PC-3 (cell line): ENCODE measurements at regions of chr22 and their contacts with region 1.

Region 1: DNA sequence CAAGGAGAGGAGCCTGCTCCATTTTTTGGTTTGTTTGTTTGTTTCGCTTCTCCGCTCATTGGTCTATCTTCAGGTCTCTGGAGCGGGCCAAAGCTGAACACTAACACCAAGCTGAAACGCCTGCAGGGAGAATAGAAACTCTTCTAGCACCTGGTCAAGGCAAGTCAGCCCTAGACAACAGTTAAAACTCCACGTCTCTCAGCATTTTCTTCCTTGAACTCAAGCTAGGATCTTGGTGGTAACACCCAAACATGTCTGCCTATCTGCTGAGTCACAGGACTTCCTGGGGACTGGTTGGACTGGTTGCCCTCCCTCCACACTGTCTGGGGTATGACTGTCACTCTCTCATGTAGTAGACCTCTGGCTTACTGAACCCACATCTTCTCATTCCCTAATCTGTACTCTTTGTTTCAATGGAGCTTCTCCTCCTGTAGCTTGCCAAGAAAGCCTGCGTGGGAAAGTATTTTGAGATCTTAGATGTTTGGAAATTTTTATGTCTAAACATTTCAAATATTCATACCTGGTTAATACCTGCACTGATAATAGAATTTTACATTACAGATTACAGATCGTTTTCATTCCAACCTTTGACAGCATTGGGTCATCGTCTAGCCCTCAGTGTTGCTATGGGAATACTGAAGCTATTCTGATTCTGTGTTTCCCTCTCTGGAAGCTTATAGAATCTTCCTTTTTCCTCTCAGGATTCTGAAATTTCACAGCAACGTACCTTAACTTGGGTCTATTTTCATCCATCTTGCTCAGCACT is 24.1 kb upstream of the RBFOX2 start:
- DNase-seq: peak; percentile 81
- ATAC-seq: peak; percentile 92
- H3K4me3 ChIP-seq: peak overlapping the region; percentile 26; the same call in 1 of the 2 replicates
- H3K27ac ChIP-seq: peak overlapping the region; percentile 97
- H3K4me1 ChIP-seq: peaks cover 23% of the 10 kb centered on the region
- H3K27me3 ChIP-seq: no peaks in the 10 kb centered on the region
- CTCF ChIP-seq: no peak

Region 2: DNA sequence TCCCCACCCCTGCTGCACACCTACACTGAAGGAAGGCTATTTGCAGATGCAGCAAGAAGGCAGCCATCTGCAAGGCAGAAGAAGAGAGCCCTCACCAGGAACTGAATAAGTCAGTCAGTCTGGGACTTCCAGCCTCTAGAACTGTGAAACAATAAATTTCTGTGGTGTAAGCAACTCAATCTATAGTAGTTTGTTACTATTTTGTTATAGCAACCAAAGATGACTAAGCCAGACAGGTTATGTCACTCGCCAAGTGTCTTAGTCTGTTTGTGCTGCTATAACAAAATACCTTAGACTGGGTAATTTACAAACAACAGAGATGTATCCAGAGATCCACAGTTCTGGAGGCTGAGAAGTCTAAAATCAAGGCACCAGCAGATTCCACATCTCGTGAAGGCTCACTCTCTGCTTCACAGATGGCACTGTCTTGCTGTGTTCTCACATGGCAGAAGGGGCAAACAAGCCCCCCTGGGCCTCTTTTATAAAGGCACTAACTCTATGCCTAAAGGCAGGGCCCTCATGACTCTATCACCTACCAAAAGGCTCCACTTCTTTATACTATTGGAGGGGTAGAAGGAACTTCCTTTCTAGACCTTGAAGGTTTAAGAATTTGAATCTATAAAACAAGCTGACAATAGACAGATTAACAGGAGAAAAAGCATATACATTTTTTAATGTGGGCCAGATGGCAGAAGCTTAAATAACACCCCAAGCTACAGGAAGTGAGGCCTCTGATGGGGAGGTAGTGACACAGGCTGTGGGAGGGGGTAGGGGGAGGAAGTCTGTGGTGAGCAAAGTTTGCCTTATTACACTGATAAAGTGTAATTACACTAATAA is 392.2 kb before region 1 on chr22:
- CTCF ChIA-PET with region 1: no interaction called
- POLR2A ChIA-PET with region 1: no interaction called
- intact Hi-C with region 1: no loop called
- DNase-seq: peak; percentile 28
- ATAC-seq: peak; percentile 46
- H3K4me3 ChIP-seq: no peak overlapping the region
- H3K27ac ChIP-seq: no peak overlapping the region
- H3K4me1 ChIP-seq: peaks cover 6% of the 10 kb centered on the region
- H3K27me3 ChIP-seq: no peaks in the 10 kb centered on the region
- CTCF ChIP-seq: no peak

Region 3: GRCh38 chr22:35727436-35727835 is 325.3 kb before region 1 on chr22:
- CTCF ChIA-PET with region 1: no interaction called
- POLR2A ChIA-PET with region 1: no interaction called
- intact Hi-C with region 1: no loop called
- DNase-seq: no peak
- ATAC-seq: no peak
- H3K4me3 ChIP-seq: no peak overlapping the region
- H3K27ac ChIP-seq: no peak overlapping the region
- H3K4me1 ChIP-seq: no peaks in the 10 kb centered on the region
- H3K27me3 ChIP-seq: no peaks in the 10 kb centered on the region
- CTCF ChIP-seq: no peak

Region 4: GRCh38 chr22:35910003-35910769 is 142.5 kb before region 1 on chr22:
- CTCF ChIA-PET with region 1: no interaction called
- POLR2A ChIA-PET with region 1: no interaction called
- intact Hi-C with region 1: no loop called
- DNase-seq: no peak
- ATAC-seq: no peak
- H3K4me3 ChIP-seq: no peak overlapping the region
- H3K27ac ChIP-seq: no peak overlapping the region
- H3K4me1 ChIP-seq: peaks cover 25% of the 10 kb centered on the region
- H3K27me3 ChIP-seq: no peaks in the 10 kb centered on the region
- CTCF ChIP-seq: no peak

Region 5: GRCh38 chr22:35938226-35938625 is 114.5 kb before region 1 on chr22:
- CTCF ChIA-PET with region 1: no interaction called
- POLR2A ChIA-PET with region 1: no interaction called
- intact Hi-C with region 1: no loop called
- DNase-seq: no peak
- ATAC-seq: no peak
- H3K4me3 ChIP-seq: no peak overlapping the region
- H3K27ac ChIP-seq: no peak overlapping the region
- H3K4me1 ChIP-seq: no peaks in the 10 kb centered on the region
- H3K27me3 ChIP-seq: no peaks in the 10 kb centered on the region
- CTCF ChIP-seq: no peak

Region 6: DNA sequence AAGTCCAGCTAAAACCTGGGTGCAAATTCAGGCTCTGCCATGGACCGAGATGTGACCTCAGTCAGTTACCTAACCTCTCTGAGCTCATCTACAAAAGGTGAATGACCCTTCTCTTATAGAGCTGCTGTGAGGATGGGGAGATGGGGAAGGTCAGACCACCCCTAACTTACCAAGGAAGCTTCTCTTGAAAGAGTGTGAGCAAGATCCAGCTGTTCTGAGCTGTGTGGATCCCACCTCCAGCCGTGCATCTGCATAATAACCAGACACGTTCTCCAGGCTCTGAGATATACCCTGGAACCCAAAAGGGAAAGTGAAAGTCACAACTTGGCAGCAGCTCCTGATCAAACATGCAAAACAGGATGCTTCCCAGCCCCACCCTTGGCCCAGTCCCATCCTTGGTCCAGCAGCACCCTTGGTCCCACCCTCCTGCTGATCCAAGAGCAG is 107.8 kb after region 1 on chr22 and contains the start of gene APOL3:
- CTCF ChIA-PET with region 1: interaction called, 12 read pairs
- POLR2A ChIA-PET with region 1: no interaction called
- intact Hi-C with region 1: no loop called
- DNase-seq: peak; percentile 29
- ATAC-seq: peak; percentile 22; the same call in 1 of the 2 replicates
- H3K4me3 ChIP-seq: no peak within 1 kb of the TSS
- H3K27ac ChIP-seq: no peak within 1 kb of the TSS
- H3K4me1 ChIP-seq: peaks cover 12% of the 10 kb centered on the region
- H3K27me3 ChIP-seq: no peaks in the 10 kb centered on the region
- CTCF ChIP-seq: no peak
- total RNA-seq, gene APOL3: 0.23 TPM in 1 of 2 replicates, not detected in the other